Upper lobe of right lung (tissue), 1 donor: ENCODE measurements at regions of chr13 and their contacts with region 1.

Region 1: GRCh38 chr13:23871616-23872220 is 17.5 kb downstream of the MIPEP start:
- DNase-seq: no peak
- ATAC-seq: no peak
- H3K4me3 ChIP-seq: no peak overlapping the region
- H3K27ac ChIP-seq: no peak overlapping the region
- H3K4me1 ChIP-seq: peaks cover 10% of the 10 kb centered on the region
- H3K27me3 ChIP-seq: no peaks in the 10 kb centered on the region
- CTCF ChIP-seq: peak; percentile 65

Region 2: GRCh38 chr13:23466144-23467002 is 405.3 kb before region 1 on chr13:
- intact Hi-C with region 1: loop called (anchors 10 kb)
- DNase-seq: peak; percentile 81
- ATAC-seq: peak; percentile 93
- H3K4me3 ChIP-seq: peak overlapping the region; percentile 50
- H3K27ac ChIP-seq: peak overlapping the region; percentile 19
- H3K4me1 ChIP-seq: no peaks in the 10 kb centered on the region
- H3K27me3 ChIP-seq: no peaks in the 10 kb centered on the region
- CTCF ChIP-seq: peak; percentile 56

Region 3: DNA sequence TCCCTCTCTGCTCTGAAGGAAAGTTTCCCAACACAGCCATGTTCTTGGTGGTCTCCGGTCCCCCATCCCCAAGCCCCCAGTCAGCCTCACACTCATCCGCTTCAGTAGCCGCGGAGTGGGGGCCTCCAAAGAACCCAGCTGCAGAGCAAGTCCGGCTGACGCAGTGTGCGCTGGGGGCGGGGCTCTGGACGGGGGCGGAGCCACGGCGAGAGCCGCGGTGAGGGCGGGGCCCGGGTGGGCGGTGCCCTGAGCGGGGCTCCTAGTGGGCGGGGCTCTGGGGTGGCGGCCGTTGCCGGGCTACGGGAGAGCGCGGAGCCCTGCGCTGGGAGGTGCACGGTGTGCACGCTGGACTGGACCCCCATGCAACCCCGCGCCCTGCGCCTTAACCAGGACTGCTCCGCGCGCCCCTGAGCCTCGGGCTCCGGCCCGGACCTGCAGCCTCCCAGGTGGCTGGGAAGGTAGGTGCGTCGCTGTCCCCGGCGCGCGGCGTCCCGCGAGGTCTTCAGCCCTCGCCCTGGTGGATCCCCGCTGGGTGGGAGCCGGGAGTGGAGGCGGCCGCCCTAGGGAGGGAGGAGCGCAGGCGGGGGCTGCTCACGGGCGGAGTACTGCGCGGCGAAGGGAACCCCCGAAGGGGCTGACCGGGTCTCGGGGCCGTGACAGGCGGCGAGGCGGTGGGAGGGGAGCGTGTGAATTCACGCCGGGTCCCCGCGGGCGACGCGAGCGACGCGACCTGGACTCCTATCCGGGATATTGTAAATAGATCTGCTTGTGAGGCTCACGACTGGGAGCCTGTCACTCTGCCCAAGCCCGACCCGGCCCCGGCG is 292.4 kb before region 1 on chr13:
- intact Hi-C with region 1: loop called (anchors 10 kb)
- DNase-seq: peak; percentile 97
- ATAC-seq: peak; percentile 99
- H3K4me3 ChIP-seq: peak overlapping the region; percentile 66
- H3K27ac ChIP-seq: peak overlapping the region; percentile 83
- H3K4me1 ChIP-seq: peaks cover 3% of the 10 kb centered on the region
- H3K27me3 ChIP-seq: no peaks in the 10 kb centered on the region
- CTCF ChIP-seq: no peak

Region 4: GRCh38 chr13:23992781-23993679 is 121.3 kb after region 1 on chr13:
- intact Hi-C with region 1: no loop called
- DNase-seq: no peak
- ATAC-seq: peak; percentile 55
- H3K4me3 ChIP-seq: no peak overlapping the region
- H3K27ac ChIP-seq: no peak overlapping the region
- H3K4me1 ChIP-seq: peaks cover 4% of the 10 kb centered on the region
- H3K27me3 ChIP-seq: no peaks in the 10 kb centered on the region
- CTCF ChIP-seq: no peak